AG04449 (cell line): ENCODE measurements at regions of chr12 and their contacts with region 1.

Region 1: DNA sequence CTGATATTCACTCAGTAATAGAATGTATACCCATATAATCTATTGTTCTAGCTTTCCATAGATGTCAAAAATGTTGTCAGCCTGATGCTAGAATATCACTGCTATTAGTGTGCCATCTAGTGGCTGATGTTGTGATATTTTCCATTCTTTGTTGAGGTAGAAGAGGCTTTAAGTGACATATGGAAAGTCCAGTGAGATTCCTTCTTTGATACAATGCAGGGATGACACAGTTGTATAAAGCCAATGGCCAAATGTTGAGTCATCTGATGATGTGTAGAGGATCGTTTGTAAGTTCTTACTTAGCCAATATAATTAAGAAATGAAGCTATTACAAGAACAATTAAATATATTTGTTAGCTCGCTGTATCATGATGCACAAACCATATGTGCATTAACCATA is 58.1 kb upstream of the PCED1B start:
- DNase-seq: peak; percentile 64
- H3K4me3 ChIP-seq: no peak overlapping the region
- CTCF ChIP-seq: peak; percentile 47

Region 2: DNA sequence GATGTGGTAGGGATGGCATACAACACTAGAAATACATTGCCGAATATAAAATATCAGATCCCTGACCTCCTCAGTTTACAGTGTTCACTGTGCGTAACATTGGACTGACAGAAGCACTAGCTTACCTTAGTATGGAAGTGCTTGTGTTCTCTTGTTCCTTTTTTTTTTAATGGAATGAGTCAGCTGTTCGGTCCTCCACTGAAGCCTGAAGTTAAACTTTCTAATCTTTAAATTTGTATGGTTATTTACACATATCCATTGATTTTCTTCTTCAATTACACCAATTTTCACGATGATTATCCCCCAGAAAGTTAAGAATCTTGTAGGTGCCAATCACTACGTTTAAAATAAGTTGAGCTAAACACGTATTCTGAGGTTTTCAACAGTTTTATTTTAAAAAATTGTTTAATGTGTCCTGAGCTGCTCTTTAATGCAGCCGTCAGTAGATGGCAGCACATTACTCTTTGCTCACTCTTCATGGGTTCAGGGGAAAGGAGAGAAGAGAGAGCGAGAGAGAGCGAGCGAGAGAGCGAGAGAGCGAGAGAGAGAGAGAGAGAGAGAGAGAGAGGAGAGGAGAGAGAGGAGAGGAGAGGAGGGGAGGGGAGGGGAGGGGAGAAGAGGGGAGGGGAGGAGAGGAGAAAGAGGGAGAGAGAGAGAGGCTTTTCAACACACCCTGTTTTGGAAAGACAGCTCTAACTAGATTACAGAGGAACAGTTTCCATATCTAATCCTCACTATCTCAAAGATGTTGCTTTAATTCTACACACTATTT is 896.3 kb before region 1 on chr12:
- CTCF ChIA-PET with region 1: interaction called, 24 read pairs
- POLR2A ChIA-PET with region 1: no interaction called
- DNase-seq: peak; percentile 53
- H3K4me3 ChIP-seq: no peak overlapping the region
- CTCF ChIP-seq: peak; percentile 63

Region 3: GRCh38 chr12:46675736-46676135 is 345.6 kb before region 1 on chr12:
- CTCF ChIA-PET with region 1: interaction called, 49 read pairs
- POLR2A ChIA-PET with region 1: no interaction called
- DNase-seq: no peak
- H3K4me3 ChIP-seq: no peak overlapping the region
- CTCF ChIP-seq: peak; percentile 1

Region 4: DNA sequence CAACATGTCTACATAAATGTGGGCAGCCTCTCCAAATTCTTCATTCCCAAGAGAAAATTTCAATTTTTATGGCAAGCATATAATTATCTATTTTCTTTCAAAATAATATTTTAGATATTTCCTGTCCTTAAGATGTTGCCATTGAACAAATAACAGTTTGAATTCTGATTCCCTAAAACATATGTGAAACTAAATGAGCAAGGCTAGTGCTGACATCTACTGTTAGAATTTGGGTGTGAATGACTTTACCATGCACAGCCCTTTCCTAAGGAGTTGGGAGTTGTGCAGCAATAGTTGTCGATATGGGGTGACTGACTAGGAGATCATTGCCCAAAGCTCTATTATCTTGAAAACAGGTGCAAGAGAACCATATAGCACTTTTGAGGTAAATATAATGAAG is 87.4 kb before region 1 on chr12:
- CTCF ChIA-PET with region 1: interaction called, 44 read pairs
- POLR2A ChIA-PET with region 1: no interaction called
- DNase-seq: no peak
- H3K4me3 ChIP-seq: no peak overlapping the region
- CTCF ChIP-seq: peak; percentile 56

Region 5: DNA sequence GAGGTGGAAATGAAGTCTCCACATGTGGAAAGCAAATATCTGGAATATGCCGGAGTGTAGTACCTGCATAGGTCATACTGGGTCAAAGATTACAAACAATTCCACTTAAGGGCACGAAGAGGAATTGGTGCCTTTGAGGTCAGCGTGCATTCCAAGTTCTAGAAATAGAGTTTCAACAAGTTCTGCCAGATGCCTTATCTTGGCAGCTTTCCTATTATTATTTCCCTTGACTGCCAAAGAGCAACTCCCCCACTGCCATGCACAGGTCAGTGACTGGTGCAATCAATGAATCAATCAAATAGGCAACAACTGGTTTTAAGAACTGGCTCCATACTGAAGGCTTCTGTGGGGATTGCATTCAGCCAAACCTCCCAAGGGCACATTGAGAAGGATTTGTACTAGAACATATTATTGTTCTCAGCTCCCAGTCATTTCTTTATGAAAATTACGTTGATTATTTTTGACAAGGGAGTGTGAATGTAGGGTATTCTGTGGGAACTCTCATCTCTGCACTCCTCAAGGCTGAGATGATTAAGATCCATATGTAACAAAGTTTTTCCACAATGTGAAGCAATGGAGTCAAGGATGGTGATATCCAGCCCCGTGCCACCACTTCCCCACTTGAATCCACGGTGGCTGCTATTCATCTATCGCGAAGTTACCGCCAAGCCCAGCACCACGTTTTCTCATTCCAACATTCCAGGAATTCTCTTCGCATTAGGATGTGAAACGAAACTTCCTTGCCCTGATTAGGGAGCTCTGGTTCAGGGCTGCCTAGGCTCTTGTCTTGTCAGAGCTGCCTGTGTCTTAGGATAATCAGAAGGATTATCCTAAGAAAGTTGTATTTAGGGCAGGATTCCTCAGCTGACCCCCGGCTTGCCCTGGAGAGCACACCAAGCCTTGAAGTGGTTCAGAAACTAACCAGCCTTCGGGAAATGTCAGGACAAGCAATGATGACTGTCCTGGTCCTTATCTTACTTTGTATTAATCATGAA is 57.0 kb before region 1 on chr12:
- CTCF ChIA-PET with region 1: interaction called, 16 read pairs
- POLR2A ChIA-PET with region 1: no interaction called
- DNase-seq: no peak
- H3K4me3 ChIP-seq: no peak overlapping the region
- CTCF ChIP-seq: no peak

Region 6: DNA sequence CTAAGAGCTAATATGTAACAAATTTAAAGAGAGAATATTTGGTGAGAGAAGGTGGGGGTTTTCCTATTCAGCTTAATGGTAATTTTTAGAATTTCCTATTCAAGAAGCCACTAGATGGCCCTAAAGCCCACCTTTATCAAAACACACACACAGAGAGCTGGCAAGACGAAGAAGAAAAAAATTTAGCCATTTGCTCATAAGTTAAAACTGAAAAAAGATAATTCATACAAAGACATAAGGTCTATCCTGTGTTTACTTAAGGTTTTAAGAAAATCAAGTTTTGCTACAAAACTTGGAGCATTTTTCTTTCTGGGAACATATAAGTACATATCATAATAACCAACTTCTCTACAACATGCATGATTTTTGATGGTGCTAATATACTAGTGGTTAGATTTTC is 11.3 kb after region 1 on chr12:
- CTCF ChIA-PET with region 1: interaction called, 61 read pairs
- POLR2A ChIA-PET with region 1: no interaction called
- DNase-seq: no peak
- H3K4me3 ChIP-seq: no peak overlapping the region
- CTCF ChIP-seq: peak; percentile 27

Region 7: DNA sequence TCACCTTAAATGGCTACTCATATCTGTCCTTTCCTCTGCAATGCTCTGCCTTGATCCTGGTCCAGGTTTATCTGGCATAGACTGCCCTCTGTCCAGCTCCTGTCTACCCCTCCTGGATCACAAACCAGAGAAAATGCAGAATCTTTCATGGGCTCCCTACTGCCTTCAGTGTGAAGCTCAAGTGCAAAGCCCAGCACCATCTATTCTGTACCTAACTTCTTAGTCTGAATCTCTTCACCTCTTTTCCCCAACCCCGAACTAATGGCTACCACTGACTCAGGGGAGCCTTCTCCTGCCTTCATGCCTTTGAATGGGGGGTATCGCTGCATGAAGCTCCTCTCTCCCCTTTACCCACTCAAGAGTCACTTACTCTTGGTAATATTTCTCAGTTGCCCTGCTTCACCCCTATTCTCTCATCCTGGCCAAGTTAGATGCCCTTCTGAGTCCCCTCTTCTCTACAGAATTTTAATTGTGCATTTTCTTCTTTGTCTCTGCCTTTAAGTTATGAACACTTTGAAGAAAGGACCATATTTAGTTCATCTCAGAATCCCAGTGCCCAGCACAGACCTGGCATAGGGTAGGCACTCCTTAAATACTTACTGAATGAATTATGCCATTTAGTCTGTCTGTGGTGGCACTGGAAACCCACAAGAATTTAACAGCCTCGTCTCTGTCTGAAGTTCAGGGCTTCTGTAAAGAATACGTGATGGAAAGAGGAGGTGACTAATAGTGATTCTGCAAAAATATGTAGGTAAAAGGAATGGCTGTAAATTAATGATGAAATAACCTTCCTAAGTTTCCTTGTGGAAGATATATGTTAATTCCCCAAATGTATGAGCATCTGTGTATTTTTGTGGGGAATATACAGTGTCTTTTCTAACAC is 249.7 kb after region 1 on chr12:
- CTCF ChIA-PET with region 1: no interaction called
- POLR2A ChIA-PET with region 1: no interaction called
- DNase-seq: peak; percentile 85
- H3K4me3 ChIP-seq: no peak overlapping the region
- CTCF ChIP-seq: no peak